Motor neuron (in vitro differentiated cells): ENCODE measurements at regions of chr11 and their contacts with region 1.

Region 1: DNA sequence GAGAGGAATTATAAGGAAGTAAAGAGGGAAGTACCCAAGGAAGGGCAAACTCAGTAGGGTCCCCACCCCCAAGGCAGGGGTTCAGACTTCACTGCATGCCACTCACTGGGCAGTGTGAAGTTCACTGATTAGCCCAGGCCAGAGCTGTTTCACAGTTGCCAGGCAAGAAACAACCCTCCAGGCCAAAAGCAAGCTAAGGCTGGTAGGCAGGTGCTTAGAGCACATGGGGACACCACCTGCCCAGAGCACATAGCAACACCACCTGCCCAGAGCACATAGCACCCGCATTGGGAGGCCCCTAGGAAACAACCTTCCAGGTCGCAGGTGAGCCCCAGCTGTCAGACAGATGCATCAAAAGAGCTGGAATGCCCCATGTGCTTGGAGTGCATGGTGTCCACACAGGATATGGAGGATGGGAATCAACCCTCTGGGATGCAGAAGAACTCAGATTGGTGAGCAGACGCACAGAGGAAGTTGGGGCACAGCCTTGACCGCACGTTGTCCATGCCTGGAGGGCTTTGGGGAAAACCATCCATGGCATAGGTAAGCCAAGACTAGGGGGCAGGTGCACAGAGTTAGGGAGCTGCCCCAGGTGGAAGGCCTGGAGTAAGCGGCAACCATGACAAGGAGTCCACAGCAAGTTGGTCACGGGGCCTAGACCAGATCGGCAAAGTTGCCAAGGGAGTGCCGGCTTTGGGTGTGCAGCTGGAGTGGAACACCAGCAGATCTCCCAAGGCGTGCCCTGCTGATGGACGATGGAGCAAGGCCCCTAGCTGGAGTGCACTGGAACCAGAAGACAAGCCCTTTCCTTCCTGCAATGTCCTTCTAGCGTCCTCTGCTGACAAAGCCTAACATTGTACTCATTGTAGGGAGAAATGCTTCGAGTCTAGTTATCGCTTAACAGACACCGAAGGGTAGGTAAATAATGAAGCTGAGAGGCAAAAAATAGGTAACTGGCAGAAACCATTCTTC is 7.8 kb upstream of the TMEM216 start:
- ATAC-seq: peak in 1 of 8 experiments; percentile 63
- H3K4me3 ChIP-seq: no peak overlapping the region
- H3K27ac ChIP-seq: no peak overlapping the region
- H3K4me1 ChIP-seq: no peaks in the 10 kb centered on the region

Region 2: GRCh38 chr11:61332797-61333549 is 51.6 kb before region 1 on chr11 and contains the starts of genes DDB1 and TKFC:
- in situ Hi-C with region 1: loop called in 1 of 9 experiments (anchors 10 kb)
- ATAC-seq: peak; percentile 77 to 94 (median 92)
- H3K4me3 ChIP-seq: peak within 1 kb of the TSS; percentile 58 to 95 (median 91)
- H3K27ac ChIP-seq: peak within 1 kb of the TSS; percentile 93 to 97
- H3K4me1 ChIP-seq: peaks cover 34 to 41% of the 10 kb centered on the region in 2 donors
- total RNA-seq, gene DDB1: 144 to 240 (median 190) TPM
- total RNA-seq, gene TKFC: 11.1 to 84.6 (median 20.1) TPM